Pancreas (tissue), 10 donors: ENCODE measurements at regions of chr17 and their contacts with region 1.

Region 1: DNA sequence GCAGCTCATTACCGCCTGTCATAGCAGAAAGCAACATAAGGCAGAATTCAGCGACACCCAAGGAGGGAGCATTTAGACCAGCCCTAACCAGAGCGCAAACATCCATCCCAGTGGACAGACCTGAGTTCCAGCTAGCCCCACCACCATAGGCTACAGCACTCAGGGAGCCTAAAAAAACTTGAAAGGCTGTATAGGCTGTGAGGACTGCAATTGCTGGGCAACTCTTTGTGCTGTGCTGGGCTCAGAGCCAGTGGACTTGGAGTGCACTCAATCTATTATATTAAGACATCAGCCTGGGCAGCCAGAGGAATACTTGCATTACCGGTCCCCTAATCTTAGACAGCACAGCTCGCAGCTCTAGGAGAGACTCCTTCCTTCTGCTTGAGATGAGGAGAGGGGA is 207.3 kb downstream of the KIF2B start:
- DNase-seq: no peak
- ATAC-seq: no peak
- H3K4me3 ChIP-seq: no peak overlapping the region
- H3K27ac ChIP-seq: no peak overlapping the region
- H3K4me1 ChIP-seq: no peaks in the 10 kb centered on the region
- H3K27me3 ChIP-seq: no peaks in the 10 kb centered on the region
- CTCF ChIP-seq: no peak

Region 2: DNA sequence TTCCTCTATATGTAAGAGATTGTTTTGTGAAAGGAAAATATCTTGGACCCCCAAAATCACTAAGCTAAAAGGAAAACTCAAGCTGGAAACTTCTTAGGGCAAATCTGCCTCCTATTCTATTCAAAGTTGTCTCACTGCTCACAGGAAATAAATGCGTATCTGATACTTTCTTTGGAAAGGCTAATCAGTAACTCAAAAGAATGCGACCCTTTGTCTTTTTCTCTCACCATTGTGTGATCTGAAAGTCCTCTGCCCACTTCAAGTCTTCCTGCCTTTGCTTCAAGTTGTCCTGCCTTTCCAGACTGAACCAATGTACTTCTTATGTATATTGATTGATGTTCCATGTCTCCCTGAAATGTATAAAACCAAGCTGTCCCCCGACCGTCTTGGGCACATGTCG is 50.0 kb before region 1 on chr17:
- intact Hi-C with region 1: loop called in 1 of 3 experiments (anchors 10 kb)
- DNase-seq: no peak
- ATAC-seq: no peak
- H3K4me3 ChIP-seq: no peak overlapping the region
- H3K27ac ChIP-seq: no peak overlapping the region
- H3K4me1 ChIP-seq: no peaks in the 10 kb centered on the region
- H3K27me3 ChIP-seq: no peaks in the 10 kb centered on the region
- CTCF ChIP-seq: no peak